Heart left ventricle (tissue), 16 donors: ENCODE measurements at regions of chr13 and their contacts with region 1.

Region 1: GRCh38 chr13:51721496-51721895 is 82.5 kb downstream of the DHRS12 start:
- DNase-seq: peak in 4 of 5 donors; percentile 47 to 77 (median 62)
- ATAC-seq: peak; percentile 87 to 93 (median 90)
- H3K4me3 ChIP-seq: no peak overlapping the region
- H3K27ac ChIP-seq: peak overlapping the region in 11 of 12 donors; percentile 28 to 66 (median 56)
- H3K4me1 ChIP-seq: peaks cover 0 to 41% (median 8%) of the 10 kb centered on the region in 12 donors
- H3K27me3 ChIP-seq: no peaks in the 10 kb centered on the region
- CTCF ChIP-seq: no peak
- POLR2A ChIP-seq: no peak

Region 2: DNA sequence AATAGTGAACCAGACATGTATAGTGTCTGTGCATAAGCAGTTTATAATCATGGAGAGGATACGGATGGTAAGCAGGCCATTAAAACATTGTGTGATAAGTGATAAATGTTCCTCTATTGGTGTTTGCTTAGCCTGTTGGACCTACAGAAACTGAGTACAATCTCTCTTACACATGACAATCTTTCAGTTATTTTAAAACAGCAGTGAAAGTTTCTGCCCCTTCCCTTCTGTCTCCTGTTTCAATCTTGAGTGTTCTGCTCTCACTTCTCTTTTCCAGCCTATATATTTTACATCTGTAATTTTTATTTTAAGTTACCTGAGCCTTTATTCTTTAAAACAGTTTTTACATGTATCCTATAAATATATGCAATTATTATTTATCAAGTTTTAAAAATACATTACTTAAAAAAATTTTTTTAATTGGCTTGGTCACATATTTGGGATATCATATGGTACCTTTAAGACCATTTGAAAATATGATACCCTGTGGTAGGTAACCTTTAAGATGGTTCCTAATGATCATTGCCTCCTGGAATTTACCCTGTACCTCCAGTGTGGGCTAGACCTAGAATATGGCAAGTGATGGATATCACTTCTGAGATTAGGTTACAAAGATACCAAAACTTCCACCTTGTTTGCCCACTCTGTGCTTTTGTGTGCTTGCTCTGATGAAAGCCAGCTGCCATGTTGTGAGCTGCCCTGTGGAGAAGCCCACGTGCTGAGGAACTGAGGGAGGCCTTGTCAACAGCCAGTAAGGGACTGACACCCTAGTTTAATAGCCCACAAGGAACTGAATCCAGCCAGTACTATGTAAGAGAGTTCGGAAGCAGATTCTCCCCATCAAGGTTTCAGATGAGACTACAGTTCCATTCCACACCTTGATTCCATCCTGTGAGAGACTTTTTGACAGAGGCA is 16.8 kb before region 1 on chr13:
- intact Hi-C with region 1: loop called in 1 of 10 experiments (anchors 2 kb)
- DNase-seq: no peak
- ATAC-seq: no peak
- H3K4me3 ChIP-seq: no peak overlapping the region
- H3K27ac ChIP-seq: no peak overlapping the region
- H3K4me1 ChIP-seq: no peaks in the 10 kb centered on the region
- H3K27me3 ChIP-seq: no peaks in the 10 kb centered on the region
- CTCF ChIP-seq: no peak
- POLR2A ChIP-seq: no peak